Activated CD4-positive, alpha-beta T cell treated with anti-CD3 and anti-CD28 coated beads for 36 hours (primary cell): ENCODE measurements at regions of chr10 and their contacts with region 1.

Region 1: DNA sequence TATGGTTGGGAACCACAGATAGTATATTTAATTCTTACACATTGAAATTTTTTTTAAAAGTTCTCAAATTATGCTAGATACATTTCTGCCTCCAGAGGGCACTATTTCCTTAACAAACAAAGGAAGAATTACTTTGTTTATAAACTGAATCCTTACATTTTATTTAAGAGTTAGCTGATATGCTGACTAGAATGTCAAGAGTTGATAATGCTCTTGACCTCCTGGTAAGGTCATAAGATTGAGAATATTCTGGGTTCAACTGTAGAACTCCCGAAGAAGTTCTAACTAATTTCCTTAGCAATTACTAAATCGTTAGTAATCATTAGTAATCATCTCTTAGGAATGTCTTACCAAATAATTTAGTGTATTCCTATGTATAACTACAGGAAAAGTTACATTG is 95.3 kb upstream of the CYP26C1 start:
- DNase-seq: no peak
- ATAC-seq: no peak
- H3K4me3 Mint-ChIP-seq: no peak overlapping the region
- H3K27ac Mint-ChIP-seq: no peak overlapping the region
- H3K4me1 Mint-ChIP-seq: no peaks in the 10 kb centered on the region
- H3K27me3 Mint-ChIP-seq: no peaks in the 10 kb centered on the region

Region 2: GRCh38 chr10:93039721-93040120 is 74.4 kb after region 1 on chr10:
- CTCF ChIA-PET with region 1: interaction called, 4 read pairs
- POLR2A ChIA-PET with region 1: no interaction called
- intact Hi-C with region 1: loop called in 1 of 2 experiments (anchors 2 kb)
- DNase-seq: no peak
- ATAC-seq: no peak
- H3K4me3 Mint-ChIP-seq: no peak overlapping the region
- H3K27ac Mint-ChIP-seq: no peak overlapping the region
- H3K4me1 Mint-ChIP-seq: no peaks in the 10 kb centered on the region
- H3K27me3 Mint-ChIP-seq: no peaks in the 10 kb centered on the region

Region 3: DNA sequence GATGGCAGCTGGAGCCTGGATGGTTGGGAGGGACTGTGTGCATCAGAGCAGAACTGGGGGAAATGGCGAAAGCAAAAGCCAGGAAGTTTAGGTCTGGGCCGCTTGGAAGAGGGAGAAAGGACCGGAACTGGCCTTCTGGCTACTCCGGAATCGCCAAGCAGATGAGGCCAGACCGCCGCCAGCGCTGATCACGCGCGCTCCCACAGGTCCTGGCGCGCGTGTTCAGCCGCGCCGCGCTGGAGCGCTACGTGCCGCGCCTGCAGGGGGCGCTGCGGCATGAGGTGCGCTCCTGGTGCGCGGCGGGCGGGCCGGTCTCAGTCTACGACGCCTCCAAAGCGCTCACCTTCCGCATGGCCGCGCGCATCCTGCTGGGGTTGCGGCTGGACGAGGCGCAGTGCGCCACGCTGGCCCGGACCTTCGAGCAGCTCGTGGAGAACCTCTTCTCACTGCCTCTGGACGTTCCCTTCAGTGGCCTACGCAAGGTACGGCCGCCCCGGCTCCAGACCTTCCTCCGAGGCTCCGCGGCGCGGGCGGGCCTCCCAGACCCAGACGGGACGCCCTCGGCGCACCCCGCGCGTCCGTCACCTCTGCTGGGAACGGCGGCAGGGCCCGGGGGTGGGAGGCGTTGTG is 97.3 kb after region 1 on chr10:
- CTCF ChIA-PET with region 1: interaction called, 6 read pairs
- POLR2A ChIA-PET with region 1: no interaction called
- intact Hi-C with region 1: loop called in 1 of 2 experiments (anchors 10 kb)
- DNase-seq: peak; percentile 81
- ATAC-seq: peak; percentile 91
- H3K4me3 Mint-ChIP-seq: peak overlapping the region; percentile 66
- H3K27ac Mint-ChIP-seq: no peak overlapping the region
- H3K4me1 Mint-ChIP-seq: peaks cover 21% of the 10 kb centered on the region
- H3K27me3 Mint-ChIP-seq: peaks cover 53% of the 10 kb centered on the region